ENCODE measurements at regions of chr9 and their contacts with region 1.

Region 1: DNA sequence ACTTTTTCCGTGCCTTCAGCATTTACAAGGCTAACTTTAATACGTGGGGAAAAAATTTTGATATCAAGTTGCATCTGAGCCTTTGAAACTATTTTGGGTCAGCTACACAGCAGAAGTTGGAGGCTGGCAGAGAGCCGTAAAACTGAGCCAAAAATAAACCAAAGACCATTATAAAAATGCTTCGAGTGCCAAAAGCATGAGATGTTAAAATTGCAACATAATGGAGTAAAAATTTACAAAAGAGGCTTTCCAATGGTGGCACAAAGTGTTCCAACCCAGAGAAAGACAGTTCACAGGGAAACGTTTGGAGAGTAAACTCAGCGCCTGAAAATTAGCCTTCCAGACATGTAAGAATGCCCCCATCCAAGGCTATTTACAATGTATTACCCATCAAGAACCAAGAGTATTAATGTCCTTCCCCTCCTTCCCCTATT is 190.3 kb downstream of the TLE1 start:
- DNase-seq: peak in 1 of 2 donors; percentile 78
- H3K4me3 ChIP-seq: peak overlapping the region; percentile 17 to 29
- H3K27ac ChIP-seq: peak overlapping the region; percentile 69 to 82
- H3K4me1 ChIP-seq: peaks cover 5 to 15% of the 10 kb centered on the region in 2 donors
- H3K27me3 ChIP-seq: no peaks in the 10 kb centered on the region
- CTCF ChIP-seq: no peak

Region 2: GRCh38 chr9:81321046-81321504 is 178.0 kb before region 1 on chr9:
- intact Hi-C with region 1: loop called (anchors 5 kb)
- DNase-seq: no peak
- H3K4me3 ChIP-seq: no peak overlapping the region
- H3K27ac ChIP-seq: no peak overlapping the region
- H3K4me1 ChIP-seq: no peaks in the 10 kb centered on the region
- H3K27me3 ChIP-seq: no peaks in the 10 kb centered on the region
- CTCF ChIP-seq: no peak

Measured in ascending aorta (tissue), 2 donors.